ENCODE measurements at regions of chr16 and their contacts with region 1.

Region 1: DNA sequence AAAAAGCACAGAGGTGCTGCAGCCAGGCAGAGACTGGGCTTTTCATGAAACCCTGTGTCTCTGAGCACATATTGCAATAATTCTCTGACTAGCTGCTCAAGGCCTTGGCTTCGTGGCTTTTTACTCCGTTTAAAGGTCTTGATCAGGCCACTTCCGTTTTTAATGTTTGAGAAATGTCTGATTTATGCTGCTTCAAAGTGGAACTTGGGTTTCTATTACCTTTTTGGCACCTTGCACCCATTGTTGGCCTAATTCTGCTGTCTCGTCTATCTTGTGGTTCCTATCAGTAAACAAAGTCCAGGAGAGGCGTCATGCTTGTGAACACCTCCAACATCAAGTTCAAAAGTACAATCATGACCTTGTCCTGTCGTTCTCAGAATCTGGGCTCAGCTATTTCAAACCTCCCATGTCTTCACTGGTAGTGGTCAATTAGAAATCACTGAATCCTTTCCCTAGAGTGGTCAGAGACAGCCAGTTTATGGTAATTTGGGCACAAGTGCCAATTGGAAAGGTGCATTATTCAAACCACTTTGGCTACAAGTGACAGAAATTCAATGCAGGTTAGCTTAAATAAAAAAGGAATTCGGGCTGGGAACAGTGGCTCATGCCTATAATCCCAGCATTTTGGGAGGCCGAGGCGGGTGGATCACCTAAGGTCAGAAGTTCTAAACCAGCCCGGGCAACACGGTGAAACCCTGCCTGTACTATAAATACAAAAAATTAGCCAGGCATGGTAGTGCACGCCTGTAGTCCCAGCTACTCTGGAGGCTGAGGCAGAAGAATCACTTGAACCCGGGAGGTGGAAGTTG is 33.3 kb upstream of the METTL9 start:
- DNase-seq: peak in 5 of 7 donors; percentile 16 to 61 (median 47)
- H3K4me3 ChIP-seq: no peak overlapping the region
- H3K27ac ChIP-seq: peak overlapping the region in 1 of 5 donors; percentile 3
- H3K4me1 ChIP-seq: peaks cover 5 to 10% of the 10 kb centered on the region in 2 donors
- H3K27me3 ChIP-seq: no peaks in the 10 kb centered on the region
- CTCF ChIP-seq: no peak
- POLR2A ChIP-seq: no peak

Region 2: DNA sequence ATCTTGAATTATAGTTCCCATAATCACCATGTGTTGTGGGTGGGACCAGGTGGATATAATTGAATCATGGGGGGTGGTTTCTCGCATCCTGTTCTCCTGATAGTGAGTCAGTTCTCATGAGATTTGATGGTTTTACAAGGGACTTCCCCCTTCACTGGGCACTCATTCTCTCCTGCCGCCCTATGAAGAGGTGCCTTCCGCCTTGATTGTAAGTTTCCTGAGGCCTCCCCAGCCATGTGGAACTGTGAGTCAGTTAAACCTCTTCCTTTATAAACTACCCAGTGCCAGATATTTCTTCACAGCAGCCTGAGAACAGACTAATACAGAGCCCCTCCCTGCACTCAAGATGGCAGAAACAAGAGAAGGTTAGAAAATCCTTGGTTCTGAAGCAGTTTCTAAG is 381.2 kb before region 1 on chr16:
- intact Hi-C with region 1: loop called in 1 of 2 experiments (anchors 10 kb)
- DNase-seq: no peak
- H3K4me3 ChIP-seq: no peak overlapping the region
- H3K27ac ChIP-seq: no peak overlapping the region
- H3K4me1 ChIP-seq: peaks cover 7 to 9% of the 10 kb centered on the region in 2 donors
- H3K27me3 ChIP-seq: no peaks in the 10 kb centered on the region
- CTCF ChIP-seq: no peak
- POLR2A ChIP-seq: no peak

Region 3: GRCh38 chr16:21338537-21339268 is 227.4 kb before region 1 on chr16:
- intact Hi-C with region 1: no loop called
- DNase-seq: no peak
- H3K4me3 ChIP-seq: no peak overlapping the region
- H3K27ac ChIP-seq: no peak overlapping the region
- H3K4me1 ChIP-seq: no peaks in the 10 kb centered on the region
- H3K27me3 ChIP-seq: no peaks in the 10 kb centered on the region
- CTCF ChIP-seq: no peak
- POLR2A ChIP-seq: no peak

Region 4: DNA sequence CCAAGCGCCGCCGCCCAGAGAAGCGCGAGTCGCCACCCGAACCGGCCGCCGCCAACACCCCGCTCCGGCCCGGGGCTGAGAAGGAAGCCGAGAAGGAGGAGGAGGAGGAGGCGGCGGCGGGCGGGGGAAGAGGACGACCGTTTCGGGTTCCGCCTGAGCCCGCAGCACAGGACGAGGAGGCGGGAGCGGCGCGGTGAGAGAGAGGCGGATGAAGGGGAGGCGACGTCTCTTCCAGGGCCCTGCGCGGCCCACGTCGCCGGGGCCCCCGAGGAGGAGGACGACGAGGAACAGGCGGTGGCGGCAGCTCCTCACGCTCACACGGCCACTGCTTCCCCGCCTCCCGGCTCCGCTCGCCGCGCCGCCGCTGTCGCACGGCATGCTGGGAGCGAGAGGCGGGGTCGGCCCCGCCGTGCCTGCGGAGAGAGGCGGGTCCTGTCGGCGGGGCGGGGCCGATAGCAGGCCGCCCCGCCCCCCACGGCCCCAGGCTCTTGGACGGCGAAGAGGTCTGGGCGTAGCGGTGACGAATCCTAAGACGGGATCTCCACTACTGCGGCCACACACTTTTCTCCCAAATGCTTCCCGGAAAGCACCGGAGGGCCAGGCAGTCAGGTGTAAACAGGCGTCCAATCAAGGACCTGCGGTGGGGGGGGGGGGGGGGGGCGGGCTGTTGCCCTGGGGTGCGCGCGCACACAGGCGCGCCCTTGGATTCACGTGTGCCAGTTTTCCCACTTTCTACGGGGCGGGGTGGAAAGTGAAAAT is 64.0 kb before region 1 on chr16:
- intact Hi-C with region 1: loop called in 1 of 2 experiments (anchors 10 kb)
- DNase-seq: peak; percentile 88 to 98 (median 94)
- H3K4me3 ChIP-seq: peak overlapping the region; percentile 68 to 92 (median 88)
- H3K27ac ChIP-seq: peak overlapping the region; percentile 90 to 98 (median 97)
- H3K4me1 ChIP-seq: no peaks in the 10 kb centered on the region
- H3K27me3 ChIP-seq: no peaks in the 10 kb centered on the region
- CTCF ChIP-seq: no peak
- POLR2A ChIP-seq: peak; percentile 87 to 94

Region 5: GRCh38 chr16:22677024-22677830 is 1111.2 kb after region 1 on chr16:
- intact Hi-C with region 1: loop called in 1 of 2 experiments (anchors 5 kb)
- DNase-seq: peak in 1 of 7 donors; percentile 45
- H3K4me3 ChIP-seq: no peak overlapping the region
- H3K27ac ChIP-seq: no peak overlapping the region
- H3K4me1 ChIP-seq: no peaks in the 10 kb centered on the region
- H3K27me3 ChIP-seq: no peaks in the 10 kb centered on the region
- CTCF ChIP-seq: no peak
- POLR2A ChIP-seq: no peak

Measured in adrenal gland (tissue), 19 donors.